Ovary (tissue), 10 donors: ENCODE measurements at regions of chr1 and their contacts with region 1.

Region 1: GRCh38 chr1:68173911-68174737 is 58.2 kb downstream of the WLS start:
- DNase-seq: peak; percentile 61 to 80 (median 69)
- H3K4me3 ChIP-seq: no peak overlapping the region
- H3K27ac ChIP-seq: peak overlapping the region in 1 of 2 donors; percentile 56
- H3K4me1 ChIP-seq: peaks cover 21% of the 10 kb centered on the region
- H3K27me3 ChIP-seq: no peaks in the 10 kb centered on the region
- CTCF ChIP-seq: no peak
- EP300 ChIP-seq: no peak
- POLR2A ChIP-seq: no peak

Region 2: DNA sequence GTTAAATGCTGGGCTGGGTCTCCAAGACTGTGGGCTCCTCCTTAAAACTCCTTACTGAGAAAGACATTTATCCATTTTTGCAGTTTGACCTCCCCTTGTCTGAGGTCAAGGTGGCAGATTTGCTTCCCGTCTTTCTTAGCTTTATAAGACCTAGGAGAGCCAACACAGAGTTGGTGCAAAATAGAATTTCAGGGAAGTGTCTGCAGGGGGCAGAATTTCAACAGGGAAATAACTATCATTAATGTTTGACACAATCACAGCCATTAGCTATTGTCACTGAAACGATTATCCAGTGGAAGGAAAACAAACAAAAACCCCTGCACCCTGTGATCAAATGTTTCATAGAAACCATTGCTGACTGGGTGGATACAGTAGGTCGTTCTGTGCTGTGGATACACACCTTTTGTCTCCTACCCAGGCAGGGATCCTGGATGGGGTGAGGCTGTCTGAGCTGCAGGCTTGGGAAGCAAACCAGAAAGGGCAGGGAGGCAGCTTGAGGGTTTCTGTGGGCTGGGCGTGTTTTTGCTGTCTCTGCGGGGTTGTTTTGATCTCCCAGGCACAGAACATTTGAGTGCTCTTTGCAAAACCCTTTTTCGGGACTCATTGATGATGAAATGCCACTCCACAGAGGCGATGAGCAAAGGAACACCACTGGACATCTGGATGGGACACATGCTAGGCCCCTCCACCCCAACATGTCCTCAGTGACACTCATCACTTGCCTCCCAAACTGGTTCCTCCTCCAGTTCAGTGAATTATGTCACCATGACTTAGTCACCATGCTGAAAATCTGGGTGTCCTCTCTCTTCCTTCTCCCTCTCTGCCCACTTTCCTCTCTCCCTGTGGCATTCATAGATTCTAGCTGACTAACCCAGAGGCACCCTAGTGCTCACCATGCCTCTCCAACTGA is 649.7 kb before region 1 on chr1:
- intact Hi-C with region 1: no loop called
- DNase-seq: no peak
- H3K4me3 ChIP-seq: no peak overlapping the region
- H3K27ac ChIP-seq: no peak overlapping the region
- H3K4me1 ChIP-seq: no peaks in the 10 kb centered on the region
- H3K27me3 ChIP-seq: no peaks in the 10 kb centered on the region
- CTCF ChIP-seq: no peak
- EP300 ChIP-seq: no peak
- POLR2A ChIP-seq: no peak

Region 3: GRCh38 chr1:68221621-68222373 is 47.7 kb after region 1 on chr1:
- intact Hi-C with region 1: loop called in 1 of 4 experiments (anchors 10 kb)
- DNase-seq: no peak
- H3K4me3 ChIP-seq: no peak overlapping the region
- H3K27ac ChIP-seq: no peak overlapping the region
- H3K4me1 ChIP-seq: peaks cover 11% of the 10 kb centered on the region
- H3K27me3 ChIP-seq: no peaks in the 10 kb centered on the region
- CTCF ChIP-seq: no peak
- EP300 ChIP-seq: no peak
- POLR2A ChIP-seq: no peak

Region 4: DNA sequence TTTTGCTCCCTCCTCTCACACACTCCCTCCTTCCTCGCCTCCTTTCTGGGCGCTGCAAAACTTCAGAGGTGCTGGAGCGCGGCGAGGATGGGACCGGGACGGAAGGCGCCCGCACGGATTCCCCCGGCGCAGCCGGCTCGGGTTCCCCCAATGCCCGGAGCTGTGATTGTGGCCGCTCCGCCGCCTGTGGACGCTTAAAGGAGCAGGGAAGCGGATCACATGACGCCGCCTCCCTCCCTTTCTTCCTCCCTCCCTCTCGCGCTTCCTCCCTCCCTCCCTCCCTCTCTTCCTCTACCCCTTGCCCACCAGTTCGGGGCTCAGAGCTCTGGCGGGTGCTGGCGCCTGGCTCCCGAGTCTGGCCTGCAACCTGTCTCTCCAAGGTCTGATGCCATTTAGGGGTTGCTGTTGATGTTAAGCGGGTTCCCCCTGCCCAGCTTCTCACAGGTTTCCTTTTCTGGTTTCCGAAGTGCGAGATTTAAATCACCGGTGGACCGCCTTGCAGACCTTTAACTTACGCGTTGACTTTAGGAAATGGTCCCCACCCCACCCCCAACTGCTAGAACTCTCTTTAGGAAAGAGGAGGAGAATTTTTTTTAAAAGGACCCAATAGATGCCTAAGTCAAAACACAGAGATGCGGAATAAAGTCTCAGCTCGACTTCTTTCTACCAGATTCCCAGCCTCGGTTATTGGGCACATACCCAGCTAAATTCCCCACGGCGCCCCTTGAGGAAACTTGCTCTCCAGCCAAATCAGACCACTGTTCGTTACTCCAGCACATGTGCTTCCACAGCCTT is 58.4 kb after region 1 on chr1 and contains the start of gene WLS:
- intact Hi-C with region 1: loop called in 2 of 4 experiments (anchors 2 to 10 kb)
- DNase-seq: peak; percentile 85 to 88 (median 87)
- H3K4me3 ChIP-seq: peak within 1 kb of the TSS; percentile 78
- H3K27ac ChIP-seq: peak within 1 kb of the TSS; percentile 73 to 86
- H3K4me1 ChIP-seq: peaks cover 7% of the 10 kb centered on the region
- H3K27me3 ChIP-seq: no peaks in the 10 kb centered on the region
- CTCF ChIP-seq: peak in 1 of 3 donors; percentile 46
- EP300 ChIP-seq: no peak
- POLR2A ChIP-seq: peak; percentile 85
- total RNA-seq, gene WLS: 42.2 to 168 (median 120) TPM